Activated CD4-positive, alpha-beta T cell treated with anti-CD3 and anti-CD28 coated beads for 36 hours (primary cell): ENCODE measurements at regions of chr14 and their contacts with region 1.

Region 1: GRCh38 chr14:69726761-69727511 is 40.0 kb upstream of the SRSF5 start:
- DNase-seq: peak; percentile 90
- ATAC-seq: peak; percentile 91
- H3K4me3 Mint-ChIP-seq: peak overlapping the region; percentile 61
- H3K27ac Mint-ChIP-seq: peak overlapping the region; percentile 21
- H3K4me1 Mint-ChIP-seq: peaks cover 15% of the 10 kb centered on the region
- H3K27me3 Mint-ChIP-seq: peaks cover under 1% of the 10 kb centered on the region

Region 2: DNA sequence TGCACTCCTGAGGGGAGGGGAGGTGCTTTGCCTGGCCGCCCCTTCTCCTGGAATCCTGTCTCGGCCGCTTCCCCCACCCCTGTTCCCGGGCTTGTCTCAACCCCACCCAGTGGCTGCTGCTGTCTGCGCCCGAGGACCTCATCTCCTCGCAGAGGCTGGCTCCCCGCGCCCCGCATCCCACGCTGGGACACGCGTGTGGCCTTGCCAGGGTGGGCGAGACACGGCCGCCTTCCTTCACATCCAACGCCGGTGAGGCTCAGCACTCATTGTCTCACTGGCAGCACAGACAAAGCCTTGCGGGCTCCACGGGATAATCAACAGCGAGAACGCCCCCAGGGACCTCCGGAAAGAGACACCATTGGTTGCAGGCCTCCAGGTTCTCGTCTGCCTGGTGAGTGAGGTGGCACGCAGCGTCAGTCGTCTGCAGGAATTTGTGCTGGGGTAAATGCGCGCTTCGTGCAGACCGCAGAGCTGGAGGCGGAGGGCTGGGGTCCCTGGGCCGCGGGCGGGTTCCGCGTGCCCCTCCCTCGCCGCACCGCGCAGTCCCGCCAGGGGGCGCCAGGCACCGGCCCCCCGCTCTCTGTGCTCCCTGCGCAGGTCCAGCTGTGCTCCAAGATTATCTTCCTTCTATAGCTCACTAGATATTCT is 179.1 kb before region 1 on chr14:
- CTCF ChIA-PET with region 1: interaction called, 7 read pairs
- POLR2A ChIA-PET with region 1: no interaction called
- intact Hi-C with region 1: loop called in 1 of 2 experiments (anchors 1 kb)
- DNase-seq: peak; percentile 66
- ATAC-seq: peak; percentile 50
- H3K4me3 Mint-ChIP-seq: no peak overlapping the region
- H3K27ac Mint-ChIP-seq: no peak overlapping the region
- H3K4me1 Mint-ChIP-seq: peaks cover 9% of the 10 kb centered on the region
- H3K27me3 Mint-ChIP-seq: peaks cover 30% of the 10 kb centered on the region

Region 3: GRCh38 chr14:69605738-69606137 is 121.2 kb before region 1 on chr14:
- CTCF ChIA-PET with region 1: interaction called, 19 read pairs
- POLR2A ChIA-PET with region 1: no interaction called
- intact Hi-C with region 1: loop called (anchors 1 kb)
- DNase-seq: no peak
- ATAC-seq: no peak
- H3K4me3 Mint-ChIP-seq: no peak overlapping the region
- H3K27ac Mint-ChIP-seq: no peak overlapping the region
- H3K4me1 Mint-ChIP-seq: peaks cover 26% of the 10 kb centered on the region
- H3K27me3 Mint-ChIP-seq: no peaks in the 10 kb centered on the region

Region 4: GRCh38 chr14:69685716-69686115 is 41.2 kb before region 1 on chr14:
- CTCF ChIA-PET with region 1: interaction called, 4 read pairs
- POLR2A ChIA-PET with region 1: no interaction called
- intact Hi-C with region 1: loop called in 1 of 2 experiments (anchors 5 kb)
- DNase-seq: peak; percentile 78
- ATAC-seq: peak; percentile 74
- H3K4me3 Mint-ChIP-seq: peak overlapping the region; percentile 49
- H3K27ac Mint-ChIP-seq: peak overlapping the region; percentile 94
- H3K4me1 Mint-ChIP-seq: peaks cover 81% of the 10 kb centered on the region
- H3K27me3 Mint-ChIP-seq: no peaks in the 10 kb centered on the region

Region 5: GRCh38 chr14:69818757-69819191 is 91.8 kb after region 1 on chr14:
- CTCF ChIA-PET with region 1: no interaction called
- POLR2A ChIA-PET with region 1: no interaction called
- intact Hi-C with region 1: loop called in 1 of 2 experiments (anchors 10 kb)
- DNase-seq: peak; percentile 65
- ATAC-seq: peak; percentile 82
- H3K4me3 Mint-ChIP-seq: no peak overlapping the region
- H3K27ac Mint-ChIP-seq: no peak overlapping the region
- H3K4me1 Mint-ChIP-seq: peaks cover 4% of the 10 kb centered on the region
- H3K27me3 Mint-ChIP-seq: peaks cover 4% of the 10 kb centered on the region

Region 6: DNA sequence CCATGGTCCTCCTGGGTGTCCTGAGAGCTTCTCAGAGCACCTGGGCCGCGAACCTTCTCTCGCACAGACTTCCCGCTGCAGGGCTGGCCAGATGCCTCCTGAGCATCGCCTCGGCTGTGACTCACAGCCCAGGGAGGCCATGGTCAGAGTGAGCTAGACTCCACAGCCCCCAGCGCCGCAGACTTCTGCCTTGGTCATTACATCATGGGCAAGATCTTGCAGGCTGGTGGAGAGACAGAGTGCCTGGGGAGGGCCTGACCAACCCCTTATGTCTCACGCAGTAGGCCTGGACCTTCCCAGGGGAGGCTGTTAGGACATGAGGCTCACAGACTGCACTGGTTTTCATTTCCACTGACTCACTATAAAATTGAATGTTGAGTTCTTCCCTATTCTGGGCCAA is 194.1 kb after region 1 on chr14:
- CTCF ChIA-PET with region 1: no interaction called
- POLR2A ChIA-PET with region 1: no interaction called
- intact Hi-C with region 1: no loop called
- DNase-seq: no peak
- ATAC-seq: no peak
- H3K4me3 Mint-ChIP-seq: no peak overlapping the region
- H3K27ac Mint-ChIP-seq: no peak overlapping the region
- H3K4me1 Mint-ChIP-seq: no peaks in the 10 kb centered on the region
- H3K27me3 Mint-ChIP-seq: peaks cover 17% of the 10 kb centered on the region

Region 7: GRCh38 chr14:70073924-70074566 is 347.1 kb after region 1 on chr14:
- CTCF ChIA-PET with region 1: interaction called, 5 read pairs
- POLR2A ChIA-PET with region 1: no interaction called
- intact Hi-C with region 1: loop called in 1 of 2 experiments (anchors 5 kb)
- DNase-seq: peak; percentile 81
- ATAC-seq: peak; percentile 73
- H3K4me3 Mint-ChIP-seq: no peak overlapping the region
- H3K27ac Mint-ChIP-seq: no peak overlapping the region
- H3K4me1 Mint-ChIP-seq: no peaks in the 10 kb centered on the region
- H3K27me3 Mint-ChIP-seq: peaks cover 9% of the 10 kb centered on the region

Region 8: GRCh38 chr14:70156592-70156991 is 429.7 kb after region 1 on chr14:
- CTCF ChIA-PET with region 1: no interaction called
- POLR2A ChIA-PET with region 1: no interaction called
- intact Hi-C with region 1: no loop called
- DNase-seq: no peak
- ATAC-seq: no peak
- H3K4me3 Mint-ChIP-seq: no peak overlapping the region
- H3K27ac Mint-ChIP-seq: no peak overlapping the region
- H3K4me1 Mint-ChIP-seq: no peaks in the 10 kb centered on the region
- H3K27me3 Mint-ChIP-seq: peaks cover 9% of the 10 kb centered on the region